ENCODE measurements at regions of chr11 and their contacts with region 1.

Region 1: GRCh38 chr11:117807482-117808327 is 10.7 kb upstream of the DSCAML1 start:
- DNase-seq: peak; percentile 78 to 82 (median 80)
- ATAC-seq: peak; percentile 72
- H3K4me3 ChIP-seq: no peak overlapping the region
- H3K27ac ChIP-seq: no peak overlapping the region
- H3K4me1 ChIP-seq: peaks cover 13 to 14% of the 10 kb centered on the region in 2 experiments; a peak in 4 of 5 replicates
- H3K27me3 ChIP-seq: peaks cover 0 to 29% of the 10 kb centered on the region in 2 experiments; a peak in 3 of 5 replicates
- CTCF ChIP-seq: peak; percentile 84 to 93 (median 88)
- EP300 ChIP-seq: no peak
- POLR2A ChIP-seq: no peak
- RAD21 ChIP-seq: peak; percentile 66 to 85

Region 2: GRCh38 chr11:117443266-117444195 is 364.2 kb before region 1 on chr11:
- CTCF ChIA-PET with region 1: no interaction called
- POLR2A ChIA-PET with region 1: no interaction called
- in situ Hi-C with region 1: loop called (anchors 10 kb)
- intact Hi-C with region 1: loop called (anchors 5 kb)
- DNase-seq: peak; percentile 65 to 75 (median 66)
- ATAC-seq: peak; percentile 98
- H3K4me3 ChIP-seq: no peak overlapping the region
- H3K27ac ChIP-seq: no peak overlapping the region
- H3K4me1 ChIP-seq: peaks cover 0 to 14% of the 10 kb centered on the region in 2 experiments; a peak in 2 of 5 replicates
- H3K27me3 ChIP-seq: peaks cover 20 to 73% of the 10 kb centered on the region in 2 experiments; a peak in 4 of 5 replicates
- CTCF ChIP-seq: peak; percentile 74 to 80 (median 79)
- EP300 ChIP-seq: no peak
- POLR2A ChIP-seq: no peak
- RAD21 ChIP-seq: peak; percentile 74 to 87

Region 3: DNA sequence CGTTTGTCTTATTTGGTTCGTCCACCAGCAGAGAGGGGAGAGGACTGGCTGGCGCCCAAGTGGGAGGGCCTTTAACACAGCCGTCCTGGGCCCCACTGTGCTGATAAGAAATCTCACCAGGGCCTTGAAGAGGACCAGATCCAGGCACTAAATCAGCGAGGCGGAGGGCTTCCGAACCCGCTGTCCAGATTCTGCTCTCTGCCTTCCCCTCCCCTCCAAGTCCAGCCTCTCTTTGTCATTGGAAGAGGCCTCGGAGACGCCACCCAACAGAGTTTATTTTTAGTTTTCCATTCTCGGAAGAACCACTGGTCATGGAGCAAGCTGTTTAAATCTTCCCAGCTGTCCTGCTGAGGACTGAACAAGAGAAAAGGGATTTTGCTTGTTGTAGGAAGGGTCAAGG is 78.1 kb after region 1 on chr11:
- CTCF ChIA-PET with region 1: no interaction called
- POLR2A ChIA-PET with region 1: no interaction called
- in situ Hi-C with region 1: no loop called
- intact Hi-C with region 1: no loop called
- DNase-seq: peak in 2 of 4 experiments; percentile 21 to 37
- ATAC-seq: peak; percentile 75; the same call in 2 of the 3 replicates
- H3K4me3 ChIP-seq: no peak overlapping the region
- H3K27ac ChIP-seq: no peak overlapping the region
- H3K4me1 ChIP-seq: peaks cover 0 to 7% of the 10 kb centered on the region in 2 experiments; a peak in 3 of 5 replicates
- H3K27me3 ChIP-seq: peaks cover 36 to 63% of the 10 kb centered on the region in 2 experiments; a peak in 4 of 5 replicates
- CTCF ChIP-seq: no peak
- EP300 ChIP-seq: no peak
- POLR2A ChIP-seq: no peak
- RAD21 ChIP-seq: no peak

Measured in K562 (cell line).